Endothelial cell of umbilical vein (primary cell): ENCODE measurements at regions of chr6 and their contacts with region 1.

Region 1: DNA sequence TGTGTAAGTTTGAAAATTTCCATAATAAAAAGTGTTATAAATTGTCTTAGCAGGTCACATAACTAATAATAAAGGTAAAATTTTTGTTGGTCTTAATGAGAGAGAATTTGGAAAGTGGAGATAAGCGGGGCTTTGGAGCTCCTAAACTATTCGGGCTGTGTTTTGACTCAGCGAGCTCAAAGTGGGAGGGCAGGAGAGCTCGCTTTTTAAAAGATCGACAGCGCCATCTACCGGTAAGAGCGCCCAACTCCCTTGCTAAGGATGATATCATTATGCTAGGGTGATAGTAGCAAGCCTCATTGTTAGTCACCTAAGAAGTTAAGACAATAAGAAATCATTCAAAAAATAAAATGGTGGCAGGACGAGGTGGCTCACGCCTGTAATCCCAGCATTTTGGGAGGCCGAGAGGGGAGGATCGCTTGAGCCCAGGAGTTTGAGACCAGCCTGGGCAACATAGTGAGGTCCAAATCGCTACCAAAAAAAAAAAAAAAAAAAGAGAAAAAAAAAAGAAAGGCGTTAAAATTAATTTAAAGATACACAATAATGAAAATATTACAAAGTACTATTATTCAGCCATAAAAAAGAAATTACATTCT is 24.8 kb downstream of the C6orf15 start:
- DNase-seq: peak; percentile 93
- H3K4me3 ChIP-seq: peak overlapping the region in 1 of 3 experiments; percentile 42
- H3K27ac ChIP-seq: peak overlapping the region; percentile 84
- H3K4me1 ChIP-seq: peaks cover 12% of the 10 kb centered on the region
- H3K27me3 ChIP-seq: no peaks in the 10 kb centered on the region
- CTCF ChIP-seq: peak; percentile 72 to 74
- POLR2A ChIP-seq: no peak

Region 2: DNA sequence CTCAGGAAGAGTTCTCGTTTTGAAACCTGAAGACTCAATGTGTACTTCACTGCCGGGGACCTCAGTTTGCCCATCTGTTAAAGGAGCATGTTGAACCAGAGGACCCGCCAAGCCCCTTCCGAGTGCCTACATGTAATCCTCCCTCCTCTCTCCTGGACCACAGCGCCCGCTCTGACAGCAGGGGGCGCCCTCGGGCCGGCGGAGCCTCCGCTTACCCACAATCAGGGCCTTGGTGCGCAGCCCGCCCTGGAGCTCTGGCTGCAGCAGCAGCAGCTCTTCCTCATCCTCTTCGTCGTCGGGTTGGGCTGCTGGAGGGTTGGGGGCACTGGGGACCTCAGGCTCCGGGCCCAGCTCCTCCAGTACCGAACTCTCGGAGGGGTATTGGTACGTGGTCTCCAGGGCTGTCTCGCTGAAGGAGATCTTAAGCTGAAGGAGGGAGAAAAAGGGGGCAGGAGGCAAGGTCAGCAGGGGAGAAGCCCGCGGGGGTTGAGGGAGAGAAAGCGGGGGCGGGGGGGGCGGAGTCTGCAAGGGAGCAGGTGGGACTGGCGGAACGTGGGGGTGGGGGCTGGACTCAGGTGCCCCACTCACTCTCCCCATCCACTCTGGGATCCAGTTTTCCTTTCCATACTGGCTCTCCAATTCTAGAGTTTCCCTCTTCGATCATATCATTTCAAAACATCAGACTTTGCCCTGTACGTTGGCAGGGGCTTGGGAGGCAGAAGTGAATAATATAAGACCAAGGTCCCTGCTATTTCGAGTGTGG is 408.4 kb before region 1 on chr6:
- CTCF ChIA-PET with region 1: interaction called, 21 read pairs
- POLR2A ChIA-PET with region 1: no interaction called
- dilution Hi-C with region 1: no loop called
- intact Hi-C with region 1: loop called (anchors 2 kb)
- DNase-seq: peak; percentile 85
- H3K4me3 ChIP-seq: peak overlapping the region in 2 of 3 experiments; percentile 8 to 27
- H3K27ac ChIP-seq: peak overlapping the region; percentile 2
- H3K4me1 ChIP-seq: peaks cover 31% of the 10 kb centered on the region
- H3K27me3 ChIP-seq: no peaks in the 10 kb centered on the region
- CTCF ChIP-seq: peak; percentile 95 to 96
- POLR2A ChIP-seq: no peak

Region 3: DNA sequence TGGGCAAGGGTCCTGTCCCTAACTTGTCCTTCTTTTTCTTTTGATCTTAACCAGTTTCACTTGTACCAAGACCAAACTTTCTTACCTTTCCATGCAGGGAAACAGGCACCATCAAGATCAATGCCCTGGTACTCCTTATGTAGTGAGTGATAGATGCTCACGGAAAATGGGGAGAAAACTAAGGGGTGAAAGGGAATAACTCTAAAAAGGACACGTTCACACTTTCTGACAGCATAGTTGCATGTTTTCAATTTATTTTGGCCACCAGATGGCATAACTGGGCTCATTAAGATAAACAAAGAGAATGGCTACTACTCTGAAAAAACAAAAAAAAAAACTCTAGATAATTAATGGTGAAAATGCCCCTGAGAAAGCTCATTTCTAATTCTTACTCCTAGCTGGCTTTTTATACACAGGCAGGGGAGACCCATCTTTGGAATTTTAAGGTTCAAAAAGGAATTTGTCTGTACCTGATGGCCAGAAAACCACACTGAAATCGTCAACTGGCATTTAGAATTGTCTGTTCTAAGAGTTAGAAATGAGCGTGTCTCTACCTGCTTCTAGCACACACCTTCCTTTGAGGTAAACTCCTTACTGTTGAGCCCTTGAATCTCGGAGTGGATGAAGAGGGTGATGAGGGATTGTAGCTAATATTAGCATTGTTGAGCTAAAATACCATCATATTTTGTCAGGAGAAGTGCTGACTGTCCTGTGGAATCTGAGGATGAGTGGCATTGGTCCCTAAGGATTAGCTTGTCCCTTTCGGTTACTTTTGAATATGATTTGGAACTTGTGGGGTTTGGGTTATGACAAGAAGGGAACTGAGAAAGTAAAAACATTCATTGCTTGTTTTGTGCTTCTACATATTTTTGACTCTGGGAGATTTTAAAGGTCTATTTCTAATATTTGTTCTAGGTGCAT is 265.5 kb before region 1 on chr6:
- CTCF ChIA-PET with region 1: interaction called, 69 read pairs
- POLR2A ChIA-PET with region 1: no interaction called
- dilution Hi-C with region 1: no loop called
- intact Hi-C with region 1: no loop called
- DNase-seq: peak; percentile 75
- H3K4me3 ChIP-seq: no peak overlapping the region
- H3K27ac ChIP-seq: peak overlapping the region; percentile 21
- H3K4me1 ChIP-seq: peaks cover 36% of the 10 kb centered on the region
- H3K27me3 ChIP-seq: no peaks in the 10 kb centered on the region
- CTCF ChIP-seq: peak; percentile 49 to 52
- POLR2A ChIP-seq: no peak

Region 4: DNA sequence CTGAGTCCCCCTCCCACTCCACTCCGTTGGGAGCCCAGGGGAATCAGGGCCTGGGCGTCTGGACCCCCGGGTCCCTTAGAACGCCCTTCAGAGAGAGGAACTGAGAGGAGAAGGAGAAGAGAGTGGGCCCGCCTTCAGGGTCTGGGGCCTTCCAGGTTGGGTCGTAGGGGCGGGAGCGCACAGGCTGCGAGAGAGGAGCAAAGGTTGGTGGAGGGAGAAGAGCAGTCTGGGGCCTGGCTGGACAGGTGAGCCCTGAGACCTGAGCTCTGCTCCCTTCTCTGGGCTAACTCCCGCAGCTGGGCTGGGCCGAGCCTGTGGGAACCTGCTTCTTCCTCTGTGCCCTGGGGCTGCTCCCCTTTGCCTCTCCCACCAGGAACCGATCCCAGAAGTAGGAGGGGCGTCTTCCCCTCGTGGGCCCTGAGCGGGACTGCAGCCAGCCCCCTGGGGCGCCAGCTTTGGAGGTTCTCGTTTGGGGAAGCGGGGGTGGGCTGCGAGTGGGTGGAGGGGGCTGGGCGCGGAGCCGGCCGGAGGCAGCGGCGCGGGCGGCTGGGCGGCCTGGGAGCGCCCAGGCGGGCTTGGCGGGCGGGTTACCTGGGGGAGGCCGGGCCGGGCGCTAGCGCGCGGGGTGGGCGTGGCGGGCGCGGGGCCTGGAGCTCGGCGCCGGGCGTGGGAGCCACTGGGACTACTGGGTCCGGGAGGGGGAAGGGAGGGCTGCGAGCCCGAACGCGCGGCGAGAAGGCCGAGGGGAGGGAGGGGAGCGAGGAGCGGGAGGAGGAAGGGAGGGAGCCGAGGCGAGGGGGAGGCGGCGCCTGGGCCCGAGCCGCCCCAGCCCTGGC is 203.7 kb before region 1 on chr6 and contains the start of gene DDR1:
- CTCF ChIA-PET with region 1: interaction called, 36 read pairs
- POLR2A ChIA-PET with region 1: no interaction called
- dilution Hi-C with region 1: no loop called
- intact Hi-C with region 1: no loop called
- DNase-seq: no peak
- H3K4me3 ChIP-seq: peak within 1 kb of the TSS; percentile 22 to 76 (median 47)
- H3K27ac ChIP-seq: no peak within 1 kb of the TSS
- H3K4me1 ChIP-seq: no peaks in the 10 kb centered on the region
- H3K27me3 ChIP-seq: peaks cover 0 to 2% of the 10 kb centered on the region in 2 experiments
- CTCF ChIP-seq: no peak
- POLR2A ChIP-seq: no peak
- total RNA-seq, gene DDR1: 17.7 and 22.9 TPM in 2 replicates

Region 5: GRCh38 chr6:30955367-30956042 is 132.1 kb before region 1 on chr6:
- CTCF ChIA-PET with region 1: no interaction called
- POLR2A ChIA-PET with region 1: no interaction called
- dilution Hi-C with region 1: no loop called
- intact Hi-C with region 1: no loop called
- DNase-seq: no peak
- H3K4me3 ChIP-seq: peak overlapping the region in 2 of 3 experiments; percentile 22 to 45
- H3K27ac ChIP-seq: no peak overlapping the region
- H3K4me1 ChIP-seq: peaks cover 5% of the 10 kb centered on the region
- H3K27me3 ChIP-seq: peaks cover 50 to 53% of the 10 kb centered on the region in 2 experiments
- CTCF ChIP-seq: no peak
- POLR2A ChIP-seq: no peak

Region 6: DNA sequence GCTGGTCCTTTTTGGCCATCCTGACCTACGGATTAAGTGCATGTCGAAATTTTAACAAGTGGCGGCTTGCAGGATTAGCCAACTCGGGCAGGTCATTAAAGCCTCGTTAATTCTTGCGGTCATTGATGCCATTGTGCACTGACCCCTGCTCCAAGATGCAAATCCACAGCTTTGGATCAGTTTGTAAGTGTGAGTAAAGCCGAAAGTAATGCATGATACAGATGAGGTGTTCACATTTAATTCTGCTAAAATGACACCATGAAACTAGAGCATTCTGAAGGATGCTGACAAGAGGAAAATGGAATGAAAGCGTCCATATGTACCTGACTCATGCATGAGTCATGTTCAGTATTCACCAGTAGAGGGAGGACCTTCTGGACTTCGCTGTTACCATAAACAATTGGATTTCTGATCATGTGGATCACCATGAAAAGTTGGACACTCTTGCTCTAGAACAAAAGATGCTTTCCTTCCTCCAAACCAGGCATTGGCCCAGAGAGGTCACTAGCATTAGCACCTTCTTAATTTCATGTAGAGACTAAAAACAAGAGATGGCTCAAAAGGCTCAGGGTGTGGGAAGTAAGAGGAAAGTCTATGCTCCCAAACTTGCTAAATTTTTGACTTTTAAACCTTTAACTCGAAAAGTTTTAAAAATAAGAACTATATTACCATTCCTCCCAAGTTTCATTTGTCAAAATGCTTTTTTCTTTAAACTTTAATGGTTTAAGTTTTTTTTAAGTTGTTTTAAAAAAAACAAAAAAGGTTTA is 29.3 kb before region 1 on chr6:
- CTCF ChIA-PET with region 1: interaction called, 14 read pairs
- POLR2A ChIA-PET with region 1: no interaction called
- dilution Hi-C with region 1: no loop called
- intact Hi-C with region 1: no loop called
- DNase-seq: peak; percentile 80
- H3K4me3 ChIP-seq: no peak overlapping the region
- H3K27ac ChIP-seq: no peak overlapping the region
- H3K4me1 ChIP-seq: no peaks in the 10 kb centered on the region
- H3K27me3 ChIP-seq: peaks cover 7 to 10% of the 10 kb centered on the region in 2 experiments
- CTCF ChIP-seq: peak; percentile 36 to 60
- POLR2A ChIP-seq: no peak

Region 7: GRCh38 chr6:31128093-31128676 is 40.6 kb after region 1 on chr6:
- CTCF ChIA-PET with region 1: interaction called, 23 read pairs
- POLR2A ChIA-PET with region 1: interaction called, 3 read pairs
- dilution Hi-C with region 1: no loop called
- intact Hi-C with region 1: no loop called
- DNase-seq: peak; percentile 47
- H3K4me3 ChIP-seq: no peak overlapping the region
- H3K27ac ChIP-seq: no peak overlapping the region
- H3K4me1 ChIP-seq: peaks cover 23% of the 10 kb centered on the region
- H3K27me3 ChIP-seq: peaks cover 3 to 6% of the 10 kb centered on the region in 2 experiments
- CTCF ChIP-seq: peak; percentile 80 to 89
- POLR2A ChIP-seq: no peak